ENCODE measurements at regions of chr3 and their contacts with region 1.

Region 1: DNA sequence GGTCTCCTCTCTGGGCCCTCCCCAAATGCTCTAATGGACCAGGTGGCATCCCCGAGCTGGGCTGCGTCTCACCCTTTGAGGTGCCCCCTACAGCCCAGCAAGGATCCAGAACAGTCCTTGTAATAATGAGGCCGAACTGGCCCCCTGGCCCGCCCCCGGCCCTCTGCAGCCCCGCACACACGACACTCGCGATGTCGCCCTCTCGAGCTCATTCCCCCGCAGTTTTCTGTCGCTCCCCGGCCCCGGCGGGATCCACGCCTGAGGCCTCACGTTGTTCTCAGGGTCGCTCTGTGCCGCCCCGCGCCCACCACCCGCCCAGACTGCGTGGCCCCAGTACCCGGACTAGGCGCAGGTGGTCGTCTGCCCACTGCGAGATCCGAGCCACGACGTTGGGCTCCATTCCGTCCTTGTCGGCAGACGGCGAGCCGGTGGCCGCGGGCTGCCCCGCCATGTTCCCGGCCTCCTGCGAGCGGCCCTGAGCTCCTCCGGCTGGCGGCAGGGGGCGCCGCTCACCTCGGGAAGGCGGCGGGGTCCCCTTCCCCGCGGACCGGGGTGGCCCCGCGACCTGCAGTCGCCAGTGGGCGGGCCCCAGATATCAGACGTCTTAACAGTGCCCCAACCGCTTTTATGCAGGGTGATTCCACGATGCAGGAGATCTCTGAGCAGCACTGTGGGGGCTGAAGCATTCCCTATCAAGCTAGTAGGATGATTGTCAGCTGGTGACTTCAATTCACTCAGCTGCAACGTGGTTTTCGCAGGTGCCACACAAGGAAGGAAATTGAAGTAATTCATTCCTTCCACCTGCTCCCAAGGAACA is at the start of gene C3orf33:
- DNase-seq: peak; percentile 69
- H3K4me3 Mint-ChIP-seq: peak within 1 kb of the TSS; percentile 89
- H3K27ac Mint-ChIP-seq: peak within 1 kb of the TSS; percentile 87
- H3K4me1 Mint-ChIP-seq: no peaks in the 10 kb centered on the region
- H3K27me3 Mint-ChIP-seq: no peaks in the 10 kb centered on the region
- CTCF ChIP-seq: peak; percentile 91
- total RNA-seq, gene C3orf33: 3.2 and 3.6 TPM in 2 replicates

Region 2: GRCh38 chr3:155581579-155581978 is 224.4 kb before region 1 on chr3:
- CTCF ChIA-PET with region 1: no interaction called
- POLR2A ChIA-PET with region 1: no interaction called
- intact Hi-C with region 1: no loop called
- DNase-seq: no peak
- H3K4me3 Mint-ChIP-seq: no peak overlapping the region
- H3K27ac Mint-ChIP-seq: no peak overlapping the region
- H3K4me1 Mint-ChIP-seq: no peaks in the 10 kb centered on the region
- H3K27me3 Mint-ChIP-seq: no peaks in the 10 kb centered on the region
- CTCF ChIP-seq: no peak

Region 3: GRCh38 chr3:155753036-155753639 is 52.9 kb before region 1 on chr3:
- CTCF ChIA-PET with region 1: interaction called, 13 read pairs
- POLR2A ChIA-PET with region 1: no interaction called
- intact Hi-C with region 1: no loop called
- DNase-seq: peak; percentile 53
- H3K4me3 Mint-ChIP-seq: no peak overlapping the region
- H3K27ac Mint-ChIP-seq: no peak overlapping the region
- H3K4me1 Mint-ChIP-seq: peaks cover 5% of the 10 kb centered on the region
- H3K27me3 Mint-ChIP-seq: peaks cover 3% of the 10 kb centered on the region
- CTCF ChIP-seq: peak; percentile 52

Region 4: GRCh38 chr3:155778462-155778861 is 27.5 kb before region 1 on chr3:
- CTCF ChIA-PET with region 1: interaction called, 14 read pairs
- POLR2A ChIA-PET with region 1: interaction called, 4 read pairs
- intact Hi-C with region 1: no loop called
- DNase-seq: no peak
- H3K4me3 Mint-ChIP-seq: no peak overlapping the region
- H3K27ac Mint-ChIP-seq: no peak overlapping the region
- H3K4me1 Mint-ChIP-seq: peaks cover 5% of the 10 kb centered on the region
- H3K27me3 Mint-ChIP-seq: no peaks in the 10 kb centered on the region
- CTCF ChIP-seq: no peak

Region 5: DNA sequence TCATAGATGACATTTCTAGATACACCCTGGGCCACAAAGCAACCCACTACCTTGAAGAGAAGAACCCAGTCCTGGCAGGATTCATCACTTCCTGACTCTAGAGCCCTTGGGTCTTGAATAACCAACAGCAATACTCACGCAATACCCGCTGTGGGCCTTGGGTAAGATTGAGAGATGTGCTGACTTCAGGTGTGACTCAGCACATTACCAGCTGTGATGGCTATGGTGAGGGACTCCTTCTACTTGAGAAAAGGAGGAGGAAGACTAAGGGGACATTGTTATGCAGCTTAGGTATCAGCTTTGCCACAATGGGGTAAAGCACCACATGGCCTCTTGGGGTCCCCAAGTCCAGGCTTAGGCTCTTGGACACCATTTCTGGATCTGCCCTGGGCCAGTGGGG is 14.8 kb before region 1 on chr3:
- CTCF ChIA-PET with region 1: interaction called, 21 read pairs
- POLR2A ChIA-PET with region 1: interaction called, 3 read pairs
- intact Hi-C with region 1: no loop called
- DNase-seq: peak; percentile 67
- H3K4me3 Mint-ChIP-seq: no peak overlapping the region
- H3K27ac Mint-ChIP-seq: no peak overlapping the region
- H3K4me1 Mint-ChIP-seq: no peaks in the 10 kb centered on the region
- H3K27me3 Mint-ChIP-seq: no peaks in the 10 kb centered on the region
- CTCF ChIP-seq: no peak

Region 6: GRCh38 chr3:155854141-155854940 is 48.3 kb after region 1 on chr3 and contains the start of gene SLC33A1:
- CTCF ChIA-PET with region 1: interaction called, 18 read pairs
- POLR2A ChIA-PET with region 1: interaction called, 21 read pairs
- intact Hi-C with region 1: loop called (anchors 5 kb)
- DNase-seq: peak; percentile 99
- H3K4me3 Mint-ChIP-seq: peak within 1 kb of the TSS; percentile 87
- H3K27ac Mint-ChIP-seq: peak within 1 kb of the TSS; percentile 99
- H3K4me1 Mint-ChIP-seq: no peaks in the 10 kb centered on the region
- H3K27me3 Mint-ChIP-seq: no peaks in the 10 kb centered on the region
- CTCF ChIP-seq: no peak
- total RNA-seq, gene SLC33A1: 65.6 and 91.7 TPM in 2 replicates

Region 7: DNA sequence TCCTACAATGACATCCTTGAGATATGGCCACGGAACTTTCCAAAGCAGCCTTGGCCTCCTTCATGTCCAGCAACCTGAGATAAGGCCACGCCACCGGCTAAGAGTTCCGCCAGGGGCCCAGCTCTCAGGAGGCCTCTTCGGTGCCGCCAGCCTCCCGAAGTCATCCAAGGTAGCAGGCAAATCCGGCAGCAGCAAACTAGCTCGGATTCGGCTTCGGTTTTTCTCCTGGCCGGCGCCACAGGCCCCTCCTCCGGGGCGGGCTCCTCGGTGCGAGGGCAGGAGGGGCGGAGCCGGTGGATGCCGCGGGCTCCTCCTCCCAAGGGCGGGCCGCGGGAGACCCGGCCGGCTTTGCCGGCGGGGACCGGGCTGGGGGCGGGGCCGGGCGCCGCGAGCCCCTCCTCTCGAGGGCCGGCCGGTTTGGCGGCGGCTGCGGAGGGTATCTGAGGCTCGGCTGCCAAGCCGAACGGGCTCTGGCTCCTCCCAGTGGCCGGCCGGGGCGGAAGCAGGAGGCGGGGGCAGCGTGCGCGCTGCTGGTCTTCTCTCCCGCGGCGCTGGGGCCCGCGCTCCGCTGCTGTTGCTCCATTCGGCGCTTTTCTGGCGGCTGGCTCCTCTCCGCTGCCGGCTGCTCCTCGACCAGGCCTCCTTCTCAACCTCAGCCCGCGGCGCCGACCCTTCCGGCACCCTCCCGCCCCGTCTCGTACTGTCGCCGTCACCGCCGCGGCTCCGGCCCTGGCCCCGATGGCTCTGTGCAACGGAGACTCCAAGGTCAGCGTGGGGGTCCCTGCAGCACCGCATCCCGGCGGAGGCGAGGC is 64.3 kb after region 1 on chr3 and contains the start of gene GMPS:
- CTCF ChIA-PET with region 1: interaction called, 13 read pairs
- POLR2A ChIA-PET with region 1: interaction called, 31 read pairs
- intact Hi-C with region 1: loop called (anchors 1 kb)
- DNase-seq: peak; percentile 93
- H3K4me3 Mint-ChIP-seq: peak within 1 kb of the TSS; percentile 84
- H3K27ac Mint-ChIP-seq: peak within 1 kb of the TSS; percentile 64
- H3K4me1 Mint-ChIP-seq: peaks cover 18% of the 10 kb centered on the region
- H3K27me3 Mint-ChIP-seq: no peaks in the 10 kb centered on the region
- CTCF ChIP-seq: peak; percentile 28
- total RNA-seq, gene GMPS: 92.4 and 128 TPM in 2 replicates